Posterior cingulate gyrus (tissue), 11 donors: ENCODE measurements at regions of chr17 and their contacts with region 1.

Region 1: DNA sequence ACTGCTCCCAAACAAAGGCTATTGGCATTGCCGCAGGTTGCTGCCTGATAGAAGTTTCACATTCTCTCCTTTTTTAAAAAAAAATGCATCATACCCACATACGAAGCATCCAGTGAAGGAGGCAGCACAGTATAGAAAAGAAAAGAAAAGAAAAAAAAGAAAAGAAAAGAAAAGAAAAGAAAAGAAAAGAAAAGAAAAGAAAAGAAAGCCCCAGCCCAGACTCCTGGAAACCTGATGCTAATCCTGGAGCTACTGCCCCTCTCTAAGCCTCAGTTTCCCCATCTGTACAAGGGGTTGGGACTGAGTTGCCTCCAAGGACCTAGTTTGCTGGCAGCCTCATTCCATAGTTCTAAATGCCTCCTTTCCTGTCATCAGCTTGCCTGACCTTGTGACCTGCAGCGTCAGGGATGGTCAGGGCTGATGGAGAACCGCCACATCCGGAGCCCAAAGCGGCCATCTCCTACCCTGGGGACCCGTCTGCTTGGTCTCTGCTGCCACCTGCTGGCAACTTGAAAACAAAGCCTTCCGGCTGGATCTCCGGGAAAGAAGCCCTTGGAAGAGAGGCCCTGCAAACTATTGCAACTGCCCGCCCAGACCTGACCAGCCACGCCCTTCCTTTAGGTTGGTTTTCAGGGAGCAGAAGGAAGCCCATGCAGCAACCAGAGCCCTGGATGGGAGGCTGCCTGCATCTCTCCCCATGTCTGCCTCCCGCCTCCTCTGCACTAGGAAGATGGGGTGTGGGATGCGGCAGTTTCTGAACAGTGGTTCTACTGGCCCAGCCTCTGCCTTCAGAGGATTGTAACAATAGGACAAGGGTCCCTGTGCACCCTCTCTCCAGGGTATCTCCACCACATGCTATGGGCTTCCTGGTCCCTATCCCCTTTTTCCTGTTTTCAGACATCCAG is 13.0 kb downstream of the AIPL1 start:
- DNase-seq: peak; percentile 72 to 97 (median 88)

Region 2: DNA sequence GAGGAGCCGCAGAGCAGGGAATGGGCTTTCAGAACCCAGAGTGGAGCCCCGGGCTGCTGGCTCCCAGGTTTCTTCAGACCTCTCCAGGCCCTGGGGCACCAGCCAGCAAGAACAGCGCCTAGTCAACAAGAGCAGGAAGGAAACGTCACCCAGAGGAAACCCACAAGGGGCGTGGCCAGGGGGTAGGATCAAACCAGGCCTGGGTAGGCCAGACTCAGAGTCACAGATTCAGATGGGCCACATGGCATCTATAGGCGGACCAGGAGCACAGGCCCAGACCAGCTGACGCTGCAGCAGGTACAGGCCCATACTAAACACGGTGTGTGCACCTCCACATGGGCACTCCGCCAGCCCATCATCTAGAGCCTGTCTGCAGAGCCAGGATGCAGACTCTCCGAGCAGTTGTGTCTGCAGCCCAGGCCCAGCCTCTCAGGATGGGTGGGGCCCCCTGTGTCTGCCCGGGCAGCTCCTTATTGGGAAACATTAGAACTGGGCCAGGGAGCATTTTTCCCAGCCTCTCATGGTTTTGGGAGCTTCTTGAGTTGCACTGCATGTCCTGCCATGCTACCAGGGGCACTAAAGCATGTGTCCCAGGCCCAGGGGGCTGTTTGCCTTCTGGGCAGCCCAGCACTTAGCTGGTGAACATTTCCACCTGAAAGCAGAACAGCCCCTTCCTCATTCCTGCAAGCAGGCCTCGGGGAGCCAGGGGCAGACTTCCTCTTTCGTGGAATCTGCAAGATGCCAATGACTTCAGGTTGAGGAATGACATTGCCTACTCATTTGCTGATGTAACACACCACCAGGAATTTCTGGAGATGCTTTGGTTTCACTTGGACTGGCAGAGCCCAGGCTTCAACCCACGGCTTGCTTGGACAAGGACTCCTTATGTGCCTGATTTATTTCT is 837.3 kb before region 1 on chr17 and contains the start of gene NLRP1:
- intact Hi-C with region 1: loop called (anchors 1 kb)
- DNase-seq: peak in 8 of 10 donors; percentile 17 to 92 (median 53)

Region 3: DNA sequence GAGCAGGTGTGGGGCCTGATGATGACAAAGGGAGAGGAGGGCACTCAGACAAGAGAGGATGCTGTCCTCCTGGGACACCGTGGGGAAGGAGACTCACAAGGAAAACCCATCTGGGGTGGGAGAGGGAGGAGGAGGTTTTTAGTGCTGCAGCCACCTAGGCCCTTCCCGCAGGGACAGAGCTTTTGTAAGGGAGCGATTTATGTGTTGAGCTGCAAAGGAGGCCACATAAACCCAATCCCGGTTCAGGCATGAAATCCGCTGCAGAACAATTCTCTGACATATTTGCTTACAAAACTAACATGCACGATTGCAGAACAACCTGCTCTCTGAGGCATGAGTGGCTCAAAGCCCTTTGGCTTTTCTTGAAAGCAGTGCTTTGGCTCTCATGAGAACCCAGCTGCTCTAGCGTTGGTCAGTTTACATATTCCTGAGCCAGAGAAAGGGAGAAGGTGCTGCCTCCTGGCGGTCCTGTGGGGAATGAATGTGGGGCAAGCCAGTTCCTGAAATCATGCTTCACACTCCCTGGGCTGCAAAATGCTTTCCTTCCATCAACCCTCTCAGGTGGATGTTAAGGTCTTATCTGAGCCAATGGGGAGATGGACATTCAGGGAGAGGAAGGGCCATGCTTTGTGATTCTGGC is 715.3 kb before region 1 on chr17:
- intact Hi-C with region 1: loop called (anchors 5 kb)
- DNase-seq: peak; percentile 32 to 93 (median 74)

Region 4: DNA sequence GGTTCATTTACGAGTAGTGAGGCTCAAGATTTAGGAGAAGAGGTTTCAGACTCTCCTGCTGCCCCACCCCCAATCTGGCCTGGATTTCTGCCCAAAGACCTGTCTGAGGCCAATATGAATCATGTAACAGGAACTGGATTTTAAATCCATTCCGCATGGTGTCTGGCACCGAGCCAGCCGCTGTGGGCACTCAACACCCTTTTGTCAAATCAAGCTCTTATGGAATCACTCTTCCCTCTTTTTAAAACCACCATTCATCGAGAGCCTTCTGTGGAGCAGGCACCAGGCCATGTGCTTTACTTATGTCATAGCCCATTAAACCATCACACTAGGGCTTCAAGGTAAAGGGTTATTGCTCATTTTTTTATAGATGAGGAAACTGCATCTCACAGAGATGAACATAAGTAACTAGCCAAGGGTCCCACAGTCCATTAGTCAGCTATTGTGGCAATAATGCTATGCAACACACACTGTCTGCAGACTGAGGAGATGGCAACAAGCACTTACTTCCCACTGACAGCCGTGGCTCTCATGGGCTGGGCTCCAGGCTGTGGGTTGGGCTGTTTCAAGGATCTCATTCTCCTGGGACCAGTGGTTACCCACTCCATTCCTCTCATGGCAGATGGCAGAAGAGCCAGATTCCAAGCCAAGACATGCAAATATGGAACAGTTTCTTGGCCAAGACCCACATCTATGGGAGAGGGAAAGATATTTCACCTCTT is 258.2 kb before region 1 on chr17:
- intact Hi-C with region 1: no loop called
- DNase-seq: peak in 1 of 10 donors; percentile 10

Region 5: DNA sequence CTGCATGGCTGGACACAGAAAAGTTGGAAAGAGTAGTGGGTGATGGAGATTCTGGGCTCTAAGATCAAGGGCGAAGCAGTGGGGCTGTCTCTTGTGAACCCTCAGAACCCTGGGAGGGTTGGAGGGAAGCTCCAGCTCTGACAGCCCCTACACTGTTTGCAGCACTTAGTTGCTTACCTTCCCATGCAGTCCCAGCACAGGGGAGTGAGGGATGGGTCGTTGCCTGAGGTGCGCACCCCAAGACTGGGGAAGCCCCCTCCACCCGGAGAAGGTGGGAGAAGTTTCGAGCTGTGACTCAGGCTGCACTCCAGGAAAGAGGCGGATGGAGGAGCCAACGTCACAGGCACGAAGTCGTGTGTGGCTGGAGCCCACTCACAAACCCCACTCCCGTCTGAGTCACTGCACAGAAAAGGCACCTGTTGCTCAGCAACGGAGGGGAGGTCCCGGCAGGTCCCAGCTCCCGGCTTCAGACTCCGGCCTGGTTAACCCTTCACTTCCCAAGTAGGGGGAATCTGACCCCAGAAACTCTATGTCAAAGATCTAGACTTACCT is 47.1 kb before region 1 on chr17:
- intact Hi-C with region 1: no loop called
- DNase-seq: peak in 2 of 10 donors; percentile 17 to 85